HepG2 (cell line): ENCODE measurements at regions of chr18 and their contacts with region 1.

Region 1: GRCh38 chr18:54684784-54685183 is 93.7 kb downstream of the DYNAP start:
- DNase-seq: no peak
- ATAC-seq: no peak
- H3K4me3 ChIP-seq: no peak overlapping the region
- H3K27ac ChIP-seq: no peak overlapping the region
- H3K4me1 ChIP-seq: no peaks in the 10 kb centered on the region
- H3K27me3 ChIP-seq: no peaks in the 10 kb centered on the region
- CTCF ChIP-seq: no peak
- EP300 ChIP-seq: no peak
- POLR2A ChIP-seq: no peak
- RAD21 ChIP-seq: no peak

Region 2: GRCh38 chr18:54416436-54416835 is 268.3 kb before region 1 on chr18:
- CTCF ChIA-PET with region 1: no interaction called
- POLR2A ChIA-PET with region 1: no interaction called
- in situ Hi-C with region 1: no loop called
- intact Hi-C with region 1: no loop called
- DNase-seq: no peak
- ATAC-seq: no peak
- H3K4me3 ChIP-seq: no peak overlapping the region
- H3K27ac ChIP-seq: no peak overlapping the region
- H3K4me1 ChIP-seq: no peaks in the 10 kb centered on the region
- H3K27me3 ChIP-seq: no peaks in the 10 kb centered on the region; a peak in 1 of 5 replicates
- CTCF ChIP-seq: no peak
- EP300 ChIP-seq: no peak
- POLR2A ChIP-seq: no peak
- RAD21 ChIP-seq: no peak

Region 3: GRCh38 chr18:54794823-54795222 is 110.0 kb after region 1 on chr18:
- CTCF ChIA-PET with region 1: no interaction called
- POLR2A ChIA-PET with region 1: no interaction called
- in situ Hi-C with region 1: no loop called
- intact Hi-C with region 1: no loop called
- DNase-seq: no peak
- ATAC-seq: no peak
- H3K4me3 ChIP-seq: no peak overlapping the region
- H3K27ac ChIP-seq: no peak overlapping the region
- H3K4me1 ChIP-seq: no peaks in the 10 kb centered on the region
- H3K27me3 ChIP-seq: peaks cover 0 to 1% of the 10 kb centered on the region in 2 experiments; a peak in 1 of 5 replicates
- CTCF ChIP-seq: no peak
- EP300 ChIP-seq: no peak
- POLR2A ChIP-seq: no peak
- RAD21 ChIP-seq: no peak

Region 4: DNA sequence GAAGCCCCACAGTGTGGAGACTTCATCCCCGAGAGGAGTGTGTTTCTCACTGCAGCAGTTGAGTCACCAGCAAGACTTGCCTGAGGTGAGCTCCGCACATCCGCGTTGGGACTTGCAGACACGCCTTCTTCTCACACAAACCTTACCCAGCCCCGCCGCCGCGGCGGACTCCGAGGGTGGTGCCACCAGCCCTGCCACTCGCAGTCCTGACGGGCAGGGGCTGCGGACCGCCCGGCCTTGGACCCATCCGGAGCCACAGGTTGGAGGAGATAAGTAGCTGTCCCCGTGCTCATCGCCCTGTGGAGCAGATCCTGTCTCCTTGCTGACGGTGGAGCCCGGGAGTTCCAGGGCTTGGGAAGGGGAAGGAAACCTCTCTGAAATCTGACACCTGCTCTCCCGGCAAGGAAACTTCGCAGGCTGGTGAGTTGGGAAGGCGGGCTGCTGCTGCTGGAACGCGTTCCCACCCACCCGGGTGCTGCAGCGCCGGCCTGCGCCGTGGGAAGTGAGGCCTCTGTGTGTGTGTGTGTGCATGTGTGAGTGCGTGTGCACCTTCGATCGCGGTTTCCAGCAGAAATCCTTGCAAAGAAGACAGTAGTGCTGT is 143.6 kb after region 1 on chr18 and contains the start of gene RAB27B:
- CTCF ChIA-PET with region 1: no interaction called
- POLR2A ChIA-PET with region 1: no interaction called
- in situ Hi-C with region 1: no loop called
- intact Hi-C with region 1: loop called (anchors 5 kb)
- DNase-seq: peak; percentile 25
- ATAC-seq: peak; percentile 96
- H3K4me3 ChIP-seq: peak within 1 kb of the TSS; percentile 38 to 64 (median 42); a peak in 5 of 6 replicates
- H3K27ac ChIP-seq: no peak within 1 kb of the TSS
- H3K4me1 ChIP-seq: peaks cover 13% of the 10 kb centered on the region
- H3K27me3 ChIP-seq: peaks cover 0 to 7% of the 10 kb centered on the region in 2 experiments; a peak in 3 of 5 replicates
- CTCF ChIP-seq: no peak
- EP300 ChIP-seq: no peak
- POLR2A ChIP-seq: no peak
- RAD21 ChIP-seq: no peak
- total RNA-seq, gene RAB27B: not detected in 2 replicates